Activated B cell treated with CpG ODN at 0.5 μM for 24 hours (primary cell): ENCODE measurements at regions of chr19 and their contacts with region 1.

Region 1: GRCh38 chr19:10388957-10389356 is 8.6 kb upstream of the TYK2 start:
- DNase-seq: peak; percentile 77
- ATAC-seq: peak; percentile 56
- H3K4me3 Mint-ChIP-seq: no peak overlapping the region
- H3K27ac Mint-ChIP-seq: peak overlapping the region; percentile 35
- H3K4me1 Mint-ChIP-seq: peaks cover 23% of the 10 kb centered on the region
- H3K27me3 Mint-ChIP-seq: no peaks in the 10 kb centered on the region
- CTCF ChIP-seq: peak; percentile 92

Region 2: GRCh38 chr19:10259162-10259905 is 129.6 kb before region 1 on chr19:
- CTCF ChIA-PET with region 1: interaction called, 102 read pairs
- POLR2A ChIA-PET with region 1: interaction called, 21 read pairs
- intact Hi-C with region 1: loop called (anchors 1 kb)
- DNase-seq: peak; percentile 68
- ATAC-seq: peak; percentile 93
- H3K4me3 Mint-ChIP-seq: no peak overlapping the region
- H3K27ac Mint-ChIP-seq: no peak overlapping the region
- H3K4me1 Mint-ChIP-seq: peaks cover 5% of the 10 kb centered on the region
- H3K27me3 Mint-ChIP-seq: no peaks in the 10 kb centered on the region
- CTCF ChIP-seq: no peak

Region 3: GRCh38 chr19:10292206-10292788 is 96.7 kb before region 1 on chr19:
- CTCF ChIA-PET with region 1: interaction called, 10 read pairs
- POLR2A ChIA-PET with region 1: no interaction called
- intact Hi-C with region 1: no loop called
- DNase-seq: peak; percentile 50
- ATAC-seq: peak; percentile 16
- H3K4me3 Mint-ChIP-seq: peak overlapping the region; percentile 73
- H3K27ac Mint-ChIP-seq: peak overlapping the region; percentile 59
- H3K4me1 Mint-ChIP-seq: peaks cover 70% of the 10 kb centered on the region
- H3K27me3 Mint-ChIP-seq: peaks cover 43% of the 10 kb centered on the region
- CTCF ChIP-seq: no peak

Region 4: GRCh38 chr19:10471909-10472308 is 83.0 kb after region 1 on chr19:
- CTCF ChIA-PET with region 1: no interaction called
- POLR2A ChIA-PET with region 1: no interaction called
- intact Hi-C with region 1: no loop called
- DNase-seq: no peak
- ATAC-seq: no peak
- H3K4me3 Mint-ChIP-seq: no peak overlapping the region
- H3K27ac Mint-ChIP-seq: no peak overlapping the region
- H3K4me1 Mint-ChIP-seq: no peaks in the 10 kb centered on the region
- H3K27me3 Mint-ChIP-seq: no peaks in the 10 kb centered on the region
- CTCF ChIP-seq: no peak

Region 5: GRCh38 chr19:10533646-10534386 is 144.9 kb after region 1 on chr19:
- CTCF ChIA-PET with region 1: no interaction called
- POLR2A ChIA-PET with region 1: no interaction called
- intact Hi-C with region 1: no loop called
- DNase-seq: no peak
- ATAC-seq: no peak
- H3K4me3 Mint-ChIP-seq: no peak overlapping the region
- H3K27ac Mint-ChIP-seq: no peak overlapping the region
- H3K4me1 Mint-ChIP-seq: peaks cover 2% of the 10 kb centered on the region
- H3K27me3 Mint-ChIP-seq: peaks cover 12% of the 10 kb centered on the region
- CTCF ChIP-seq: no peak

Region 6: GRCh38 chr19:10587022-10587789 is 198.2 kb after region 1 on chr19 and contains the start of gene AP1M2:
- CTCF ChIA-PET with region 1: no interaction called
- POLR2A ChIA-PET with region 1: no interaction called
- intact Hi-C with region 1: no loop called
- DNase-seq: no peak
- ATAC-seq: no peak
- H3K4me3 Mint-ChIP-seq: no peak within 1 kb of the TSS
- H3K27ac Mint-ChIP-seq: no peak within 1 kb of the TSS
- H3K4me1 Mint-ChIP-seq: peaks cover 12% of the 10 kb centered on the region
- H3K27me3 Mint-ChIP-seq: no peaks in the 10 kb centered on the region
- CTCF ChIP-seq: no peak
- total RNA-seq, gene AP1M2: not detected in 2 replicates